ENCODE measurements at regions of chr17 and their contacts with region 1.

Region 1: DNA sequence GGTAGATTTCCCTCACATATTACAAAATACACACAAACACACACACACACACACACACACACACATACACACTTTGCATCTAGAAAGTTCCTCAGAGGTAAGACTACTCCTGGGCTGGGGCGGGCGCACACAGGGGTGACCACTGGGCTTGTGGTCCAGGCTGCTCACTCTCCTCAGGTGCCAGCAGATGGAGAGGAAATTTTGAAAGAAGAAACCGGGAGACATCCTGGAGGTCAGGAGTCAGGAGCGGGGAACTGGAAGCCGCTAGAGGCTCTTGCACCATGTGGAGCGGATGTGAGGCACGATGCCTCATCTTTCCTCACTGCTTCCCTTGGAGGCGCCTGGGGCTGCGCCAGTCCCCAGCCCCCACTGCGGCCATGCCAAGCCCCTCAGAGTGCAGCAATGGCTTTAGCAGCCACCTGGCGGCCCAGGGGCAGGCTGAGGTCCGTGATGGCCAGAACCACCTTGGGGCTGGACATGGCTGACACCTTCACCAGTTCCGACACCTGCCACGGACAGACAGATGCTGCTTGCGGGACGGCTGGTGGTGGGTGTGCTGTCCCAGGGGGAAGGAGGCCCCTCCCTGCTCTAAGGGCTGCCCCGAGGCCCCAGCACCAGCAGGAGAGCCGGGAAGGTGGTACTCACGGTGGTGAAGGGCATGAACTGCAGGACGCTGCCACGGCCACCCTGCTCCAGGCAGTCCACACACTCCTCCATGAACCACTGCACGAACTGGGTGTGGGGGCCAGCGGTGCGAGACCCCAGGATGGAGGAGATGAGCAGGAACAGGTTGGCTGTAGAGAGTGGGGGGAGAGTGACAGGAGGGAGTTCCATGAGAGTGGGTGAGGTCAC is 4.1 kb downstream of the CSF3 start:
- DNase-seq: no peak
- H3K4me3 ChIP-seq: no peak overlapping the region
- H3K27ac ChIP-seq: no peak overlapping the region
- H3K4me1 ChIP-seq: peaks cover 0 to 8% (median 1%) of the 10 kb centered on the region in 3 donors
- H3K27me3 ChIP-seq: no peaks in the 10 kb centered on the region
- CTCF ChIP-seq: no peak

Region 2: GRCh38 chr17:40168262-40168832 is 149.0 kb after region 1 on chr17:
- intact Hi-C with region 1: loop called (anchors 10 kb)
- DNase-seq: peak in 3 of 5 donors; percentile 42 to 86 (median 83)
- H3K4me3 ChIP-seq: no peak overlapping the region
- H3K27ac ChIP-seq: peak overlapping the region; percentile 25 to 34
- H3K4me1 ChIP-seq: peaks cover 0 to 3% (median 0%) of the 10 kb centered on the region in 3 donors
- H3K27me3 ChIP-seq: no peaks in the 10 kb centered on the region
- CTCF ChIP-seq: peak; percentile 84

Region 3: GRCh38 chr17:40287494-40288369 is 268.4 kb after region 1 on chr17 and contains the start of gene CDC6:
- intact Hi-C with region 1: loop called (anchors 10 kb)
- DNase-seq: peak; percentile 99 to 100 (median 99)
- H3K4me3 ChIP-seq: peak within 1 kb of the TSS; percentile 73 to 89 (median 75)
- H3K27ac ChIP-seq: no peak within 1 kb of the TSS
- H3K4me1 ChIP-seq: peaks cover 0 to 13% (median 10%) of the 10 kb centered on the region in 3 donors
- H3K27me3 ChIP-seq: no peaks in the 10 kb centered on the region
- CTCF ChIP-seq: no peak
- total RNA-seq, gene CDC6: 1.7 TPM

Measured in kidney (tissue), 22 donors.